GM12878 (cell line): ENCODE measurements at regions of chr12 and their contacts with region 1.

Region 1: GRCh38 chr12:56677680-56678079 is 10.4 kb downstream of the PTGES3 start:
- DNase-seq: no peak
- ATAC-seq: peak; percentile 80
- H3K4me3 ChIP-seq: no peak overlapping the region
- H3K27ac ChIP-seq: peak overlapping the region; percentile 52; the same call in 1 of the 2 replicates
- H3K4me1 ChIP-seq: peaks cover 42% of the 10 kb centered on the region
- H3K27me3 ChIP-seq: no peaks in the 10 kb centered on the region
- CTCF ChIP-seq: no peak
- EP300 ChIP-seq: no peak
- POLR2A ChIP-seq: no peak
- RAD21 ChIP-seq: no peak

Region 2: DNA sequence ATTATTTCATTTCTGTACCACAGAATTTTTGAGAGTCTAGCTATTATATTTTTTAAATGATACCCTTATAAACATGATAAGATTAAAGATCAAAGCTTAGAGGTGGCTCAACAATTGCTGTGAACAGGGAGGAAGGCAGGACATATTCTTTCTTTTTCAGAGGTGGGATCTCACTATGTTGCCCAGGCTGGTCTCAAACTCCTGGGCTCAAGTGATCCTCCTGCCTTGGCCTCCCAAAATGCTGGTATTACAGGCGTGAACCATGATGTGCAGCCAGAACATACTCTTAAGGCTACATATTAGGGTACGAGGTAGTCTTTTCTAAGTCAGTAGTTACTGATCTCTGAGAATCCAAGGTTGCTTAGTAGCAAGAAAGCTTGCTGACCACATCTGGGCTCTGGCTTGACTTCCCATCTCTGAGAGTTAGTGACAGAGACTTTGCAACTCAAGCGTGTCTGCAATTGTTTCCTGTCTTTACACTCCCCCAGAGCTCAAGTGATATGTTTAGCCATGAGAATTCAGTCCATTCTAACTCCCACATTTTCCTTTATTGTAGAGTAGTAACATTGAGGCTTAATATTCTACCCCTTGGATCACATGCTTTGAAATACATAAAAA is 695.3 kb before region 1 on chr12:
- CTCF ChIA-PET with region 1: no interaction called
- POLR2A ChIA-PET with region 1: no interaction called
- RAD21 ChIA-PET with region 1: no interaction called
- SMC1A ChIA-PET with region 1: no interaction called
- in situ Hi-C with region 1: no loop called
- intact Hi-C with region 1: no loop called
- DNase-seq: peak; percentile 60
- ATAC-seq: peak; percentile 96
- H3K4me3 ChIP-seq: 0 out of 2 replicates have a peak overlapping the region, but pooled peaks have one; percentile 12
- H3K27ac ChIP-seq: peak overlapping the region; percentile 38
- H3K4me1 ChIP-seq: peaks cover 16% of the 10 kb centered on the region
- H3K27me3 ChIP-seq: no peaks in the 10 kb centered on the region
- CTCF ChIP-seq: no peak
- EP300 ChIP-seq: no peak
- POLR2A ChIP-seq: no peak
- RAD21 ChIP-seq: no peak

Region 3: DNA sequence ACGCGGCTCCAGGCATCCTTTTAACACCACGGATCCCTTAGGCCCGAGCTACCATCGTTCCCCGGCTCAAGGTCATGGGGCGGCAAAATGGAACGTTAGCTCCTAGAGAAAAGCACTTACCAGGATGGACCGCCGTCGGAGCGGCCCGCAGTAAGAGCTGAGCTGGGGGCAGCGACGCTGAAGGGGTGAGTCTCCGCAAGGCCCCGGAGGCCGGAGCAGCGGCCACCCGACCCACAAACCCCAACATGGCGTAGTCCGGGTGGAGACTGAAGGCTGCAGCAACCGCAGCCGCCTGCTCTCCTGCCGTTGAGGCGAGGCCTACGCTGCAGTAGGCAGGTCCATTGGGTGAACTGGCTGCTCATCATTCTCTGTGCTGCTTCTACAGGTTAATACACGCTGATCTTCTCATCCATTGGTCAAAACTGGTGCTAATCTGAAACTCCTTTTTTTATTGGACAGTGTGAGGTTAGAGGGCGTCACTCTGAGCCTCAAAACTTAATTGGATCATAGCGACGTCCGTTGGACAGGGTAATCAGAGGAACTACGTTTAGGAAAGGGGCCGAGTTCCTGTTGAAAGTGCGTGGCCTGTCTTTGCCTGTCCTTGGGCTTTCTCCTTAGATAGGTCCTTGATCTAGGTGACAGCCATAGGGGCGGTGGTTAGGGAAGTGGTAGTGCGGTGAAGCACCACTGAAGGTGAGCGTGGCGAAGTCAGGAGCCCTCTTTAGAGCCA is 31.8 kb before region 1 on chr12 and contains the start of gene ATP5F1B:
- CTCF ChIA-PET with region 1: interaction called, 3 read pairs
- POLR2A ChIA-PET with region 1: interaction called, 10 read pairs
- RAD21 ChIA-PET with region 1: interaction called, 15 read pairs
- SMC1A ChIA-PET with region 1: interaction called, 3 read pairs
- in situ Hi-C with region 1: no loop called
- intact Hi-C with region 1: no loop called
- DNase-seq: peak; percentile 100
- ATAC-seq: peak; percentile 98
- H3K4me3 ChIP-seq: peak within 1 kb of the TSS; percentile 94
- H3K27ac ChIP-seq: peak within 1 kb of the TSS; percentile 89
- H3K4me1 ChIP-seq: no peaks in the 10 kb centered on the region
- H3K27me3 ChIP-seq: no peaks in the 10 kb centered on the region
- CTCF ChIP-seq: no peak
- EP300 ChIP-seq: no peak
- POLR2A ChIP-seq: peak; percentile 100
- RAD21 ChIP-seq: no peak
- polyA plus RNA-seq, gene ATP5F1B: 671 to 1,479 TPM